Calu3 (cell line): ENCODE measurements at regions of chr12 and their contacts with region 1.

Region 1: DNA sequence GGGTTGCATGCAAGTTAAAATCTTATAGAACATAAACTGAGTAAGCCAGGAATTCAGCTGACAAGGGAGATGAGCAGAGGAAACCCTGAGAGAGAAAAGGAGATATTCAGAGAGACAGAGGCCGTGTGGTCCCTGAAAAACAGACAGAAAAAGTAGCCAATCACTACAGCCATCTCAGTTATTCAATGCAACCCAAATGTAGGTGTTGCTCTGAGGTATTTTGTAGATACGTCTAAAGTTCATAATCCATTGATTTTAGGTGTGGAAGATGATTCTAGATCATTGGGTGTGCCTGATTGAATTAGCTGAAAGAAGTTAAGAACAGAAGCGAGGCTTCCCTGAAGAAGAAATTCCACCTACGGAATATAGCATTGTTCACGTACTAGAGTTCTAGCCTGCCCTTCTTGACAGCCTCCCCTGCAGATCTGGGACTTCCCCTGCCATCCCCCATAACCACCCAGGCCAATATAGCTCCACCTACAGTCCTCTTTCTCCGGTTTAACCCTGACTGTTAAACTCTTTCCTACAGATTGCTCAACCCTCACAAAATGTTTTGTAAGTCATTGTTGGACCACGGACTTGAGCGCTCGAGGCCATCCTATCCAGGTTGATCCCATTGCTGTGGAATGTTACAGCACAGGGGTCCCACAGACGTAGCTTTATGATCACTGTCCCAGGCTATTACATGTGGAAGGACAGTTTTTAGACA is 21.7 kb downstream of the AICDA start:
- DNase-seq: no peak
- H3K4me3 Mint-ChIP-seq: no peak overlapping the region
- H3K27ac Mint-ChIP-seq: no peak overlapping the region
- H3K4me1 Mint-ChIP-seq: no peaks in the 10 kb centered on the region
- H3K27me3 Mint-ChIP-seq: no peaks in the 10 kb centered on the region
- CTCF ChIP-seq: no peak

Region 2: DNA sequence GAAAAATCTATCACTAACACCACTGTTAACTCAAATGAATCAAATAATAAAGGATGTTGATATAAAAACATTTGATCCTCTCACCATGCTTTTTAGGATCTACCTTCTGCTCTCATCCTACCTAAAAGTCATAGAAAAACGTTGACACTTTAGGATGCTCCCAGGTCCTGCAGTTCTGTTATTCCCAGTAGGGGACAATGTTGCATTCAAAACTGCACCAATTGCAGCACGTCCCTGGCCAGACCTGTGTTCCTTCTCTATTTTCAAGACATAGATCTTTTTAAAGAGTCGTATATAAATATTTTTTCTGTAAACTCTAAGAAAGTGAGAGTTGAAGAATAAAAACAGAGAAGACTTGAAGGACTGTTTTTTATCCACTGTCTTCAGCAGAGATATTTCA is 12.9 kb after region 1 on chr12:
- CTCF ChIA-PET with region 1: interaction called, 12 read pairs
- intact Hi-C with region 1: no loop called
- DNase-seq: no peak
- H3K4me3 Mint-ChIP-seq: no peak overlapping the region
- H3K27ac Mint-ChIP-seq: no peak overlapping the region
- H3K4me1 Mint-ChIP-seq: peaks cover 4% of the 10 kb centered on the region
- H3K27me3 Mint-ChIP-seq: peaks cover 18% of the 10 kb centered on the region
- CTCF ChIP-seq: no peak